Naive thymus-derived CD8-positive, alpha-beta T cell (primary cell): ENCODE measurements at regions of chr17 and their contacts with region 1.

Region 1: GRCh38 chr17:63600569-63601438 is at the start of gene TACO1:
- DNase-seq: peak; percentile 47 to 83 (median 70)
- ATAC-seq: peak; percentile 92 to 96
- H3K4me3 Mint-ChIP-seq: peak within 1 kb of the TSS; percentile 87 to 96 (median 94)
- H3K27ac Mint-ChIP-seq: peak within 1 kb of the TSS; percentile 93 to 97 (median 96)
- H3K4me1 Mint-ChIP-seq: peaks cover 13 to 40% (median 28%) of the 10 kb centered on the region in 4 donors
- H3K27me3 Mint-ChIP-seq: no peaks in the 10 kb centered on the region
- polyA plus RNA-seq, gene TACO1: 11.3 to 18.3 (median 17.5) TPM

Region 2: DNA sequence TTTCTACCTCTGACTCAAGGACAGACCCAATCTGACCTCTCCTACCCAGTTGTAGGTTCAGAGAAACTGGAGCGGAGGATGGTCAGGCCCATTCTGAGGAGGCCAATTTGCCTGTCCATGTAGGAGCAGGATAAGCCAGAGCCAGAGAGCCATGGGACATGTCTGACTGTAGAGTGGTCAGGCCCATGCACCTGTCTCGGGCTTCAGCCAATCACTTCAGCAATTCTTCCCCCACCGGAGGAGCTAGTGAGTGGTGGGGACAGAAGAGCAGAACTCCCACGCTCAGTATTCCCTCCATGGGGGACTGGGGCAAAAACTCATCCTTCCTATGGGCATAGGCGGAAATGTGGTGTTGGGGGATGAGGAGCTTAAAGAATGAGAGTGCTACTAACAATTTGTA is 36.2 kb before region 1 on chr17:
- POLR2A ChIA-PET with region 1: no interaction called
- DNase-seq: no peak
- ATAC-seq: no peak
- H3K4me3 Mint-ChIP-seq: no peak overlapping the region
- H3K27ac Mint-ChIP-seq: peak overlapping the region in 4 of 10 donors; percentile 7 to 60 (median 28)
- H3K4me1 Mint-ChIP-seq: peaks cover 32 to 71% (median 66%) of the 10 kb centered on the region in 4 donors
- H3K27me3 Mint-ChIP-seq: no peaks in the 10 kb centered on the region

Region 3: GRCh38 chr17:63579540-63580001 is 21.2 kb before region 1 on chr17:
- POLR2A ChIA-PET with region 1: no interaction called
- DNase-seq: no peak
- ATAC-seq: no peak
- H3K4me3 Mint-ChIP-seq: no peak overlapping the region
- H3K27ac Mint-ChIP-seq: peak overlapping the region in 3 of 10 donors; percentile 1 to 71 (median 24)
- H3K4me1 Mint-ChIP-seq: peaks cover 8 to 38% (median 20%) of the 10 kb centered on the region in 4 donors
- H3K27me3 Mint-ChIP-seq: no peaks in the 10 kb centered on the region

Region 4: DNA sequence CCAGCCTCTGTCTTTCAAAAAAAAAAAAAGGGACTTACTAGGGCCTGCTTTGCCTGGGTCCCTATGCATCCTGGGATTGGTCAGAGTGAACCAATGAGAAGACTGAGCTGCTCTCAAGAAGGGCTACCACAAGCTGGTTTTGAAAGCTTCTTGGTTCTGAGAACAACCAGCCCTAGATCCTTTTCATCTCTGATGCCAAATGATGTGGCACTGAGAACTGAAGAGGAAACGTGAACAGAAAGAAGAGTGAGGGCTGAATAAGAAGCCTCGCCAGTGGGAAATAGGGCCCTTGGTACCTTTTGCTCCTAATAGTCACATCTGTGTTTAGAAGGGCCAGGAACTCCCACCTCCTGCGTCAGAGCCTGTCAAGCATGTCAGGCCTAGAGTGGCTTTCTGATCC is 10.6 kb after region 1 on chr17:
- POLR2A ChIA-PET with region 1: interaction called, 24 read pairs
- DNase-seq: peak in 2 of 10 donors; percentile 40 to 49
- ATAC-seq: peak; percentile 23 to 68
- H3K4me3 Mint-ChIP-seq: peak overlapping the region in 7 of 10 donors; percentile 18 to 62 (median 49)
- H3K27ac Mint-ChIP-seq: peak overlapping the region; percentile 75 to 96 (median 90)
- H3K4me1 Mint-ChIP-seq: peaks cover 14 to 30% (median 29%) of the 10 kb centered on the region in 4 donors
- H3K27me3 Mint-ChIP-seq: no peaks in the 10 kb centered on the region

Region 5: DNA sequence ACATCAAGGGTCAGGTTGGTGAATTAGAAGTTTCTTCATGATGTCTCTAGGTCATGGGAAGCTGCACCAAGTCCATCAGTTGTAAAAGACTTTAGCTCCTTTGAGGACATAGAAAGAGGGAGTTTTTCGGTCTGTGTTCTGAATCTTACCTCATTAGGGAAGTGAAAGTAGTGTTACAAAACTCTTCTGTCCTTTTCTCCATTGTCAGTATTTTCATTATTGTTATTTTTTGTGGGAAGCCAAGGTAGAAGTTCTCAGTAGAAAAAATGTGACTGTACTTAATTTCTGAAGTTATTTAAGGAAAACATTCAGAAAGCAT is 45.6 kb after region 1 on chr17:
- POLR2A ChIA-PET with region 1: no interaction called
- DNase-seq: no peak
- ATAC-seq: no peak
- H3K4me3 Mint-ChIP-seq: peak overlapping the region in 1 of 10 donors; percentile 13
- H3K27ac Mint-ChIP-seq: peak overlapping the region in 3 of 10 donors; percentile 4 to 84 (median 37)
- H3K4me1 Mint-ChIP-seq: peaks cover 6 to 54% (median 19%) of the 10 kb centered on the region in 4 donors
- H3K27me3 Mint-ChIP-seq: no peaks in the 10 kb centered on the region

Region 6: DNA sequence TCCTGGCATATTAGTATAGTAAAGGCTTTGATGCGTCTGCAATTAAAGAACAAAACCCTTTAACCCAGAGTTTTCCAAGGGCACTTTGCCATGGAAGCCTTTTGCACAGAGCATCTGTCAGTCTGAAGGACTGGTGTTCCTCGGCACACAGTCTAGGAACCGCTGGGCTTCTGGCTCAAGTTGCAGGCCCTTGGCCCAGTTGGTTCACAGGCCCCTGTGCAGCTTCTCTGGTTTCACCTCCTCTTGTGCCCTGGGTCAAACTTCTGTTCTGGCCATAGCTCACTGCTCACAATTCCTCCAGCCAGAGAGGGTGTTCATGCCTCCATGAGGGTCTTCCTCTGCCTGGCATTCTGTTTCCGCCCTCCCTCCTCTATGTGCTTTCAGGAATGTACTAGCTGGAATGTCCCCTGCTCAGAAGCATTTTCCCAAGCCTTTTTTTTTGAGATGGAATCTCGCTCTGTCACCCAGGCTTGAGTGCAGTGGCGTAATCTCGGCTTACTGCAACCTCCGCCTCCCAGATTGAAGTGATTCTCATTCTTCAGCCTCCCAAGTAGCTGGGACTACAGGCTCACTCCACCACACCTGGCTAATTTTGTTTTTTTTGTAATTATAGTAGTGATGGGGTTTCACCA is 696.8 kb after region 1 on chr17:
- POLR2A ChIA-PET with region 1: no interaction called
- DNase-seq: no peak
- ATAC-seq: no peak
- H3K4me3 Mint-ChIP-seq: no peak overlapping the region
- H3K27ac Mint-ChIP-seq: no peak overlapping the region
- H3K4me1 Mint-ChIP-seq: peaks cover 0 to 4% (median under 1%) of the 10 kb centered on the region in 4 donors
- H3K27me3 Mint-ChIP-seq: peaks cover 0 to 1% (median 0%) of the 10 kb centered on the region in 5 donors